Activated B cell treated with CpG ODN at 0.5 μM for 24 hours (primary cell): ENCODE measurements at regions of chr5 and their contacts with region 1.

Region 1: DNA sequence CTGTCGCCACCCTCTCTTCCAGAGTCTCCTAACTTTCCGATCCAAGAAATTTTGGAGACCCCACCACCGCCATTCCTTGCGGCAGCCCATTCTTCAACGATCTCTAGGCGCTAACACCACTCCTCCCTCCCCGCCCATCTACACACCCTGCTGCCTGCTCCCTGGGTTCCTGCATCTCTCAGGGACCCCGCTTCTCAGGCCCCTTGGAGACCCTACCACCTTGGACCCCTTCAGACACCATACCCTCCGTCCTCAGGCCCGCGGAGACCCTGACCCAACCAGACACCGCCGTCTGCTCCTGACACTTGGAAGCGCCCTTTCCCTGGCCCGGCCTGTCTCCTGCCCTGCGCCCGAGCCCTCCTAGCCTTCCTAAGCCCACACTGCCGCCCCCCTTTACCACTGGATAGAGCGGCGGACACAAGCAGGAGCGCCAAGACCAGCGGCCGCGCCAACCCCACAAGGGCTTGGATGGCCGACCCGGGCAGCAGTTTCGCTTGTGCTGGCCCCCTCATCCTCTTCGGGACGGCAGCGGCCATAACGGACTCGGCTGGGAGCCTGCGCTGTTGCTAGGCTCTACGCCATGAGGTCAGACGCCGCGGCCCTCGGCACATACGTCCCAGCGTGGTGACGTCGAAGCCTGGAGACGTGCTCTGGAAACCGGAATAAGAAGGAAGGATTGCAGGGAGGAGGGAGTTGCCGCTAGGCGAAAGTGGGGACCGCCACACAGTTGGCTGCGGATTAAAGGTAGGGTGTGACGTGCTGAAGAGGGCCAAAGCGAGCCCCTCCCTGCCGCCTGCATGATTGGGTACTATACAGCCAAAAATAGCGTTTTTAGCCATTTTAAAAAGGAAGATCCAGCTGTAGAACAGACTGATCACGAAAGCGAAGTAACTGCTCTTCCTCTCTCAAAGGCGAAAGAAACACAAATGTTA is at the start of gene C5orf15:
- DNase-seq: peak; percentile 83
- ATAC-seq: peak; percentile 90
- H3K4me3 Mint-ChIP-seq: peak within 1 kb of the TSS; percentile 95
- H3K27ac Mint-ChIP-seq: peak within 1 kb of the TSS; percentile 96
- H3K4me1 Mint-ChIP-seq: peaks cover 58% of the 10 kb centered on the region
- H3K27me3 Mint-ChIP-seq: no peaks in the 10 kb centered on the region
- CTCF ChIP-seq: no peak
- total RNA-seq, gene C5orf15: 25.5 and 25.7 TPM in 2 replicates

Region 2: GRCh38 chr5:133307275-133307674 is 661.0 kb before region 1 on chr5:
- CTCF ChIA-PET with region 1: no interaction called
- POLR2A ChIA-PET with region 1: no interaction called
- intact Hi-C with region 1: no loop called
- DNase-seq: no peak
- ATAC-seq: no peak
- H3K4me3 Mint-ChIP-seq: no peak overlapping the region
- H3K27ac Mint-ChIP-seq: no peak overlapping the region
- H3K4me1 Mint-ChIP-seq: no peaks in the 10 kb centered on the region
- H3K27me3 Mint-ChIP-seq: peaks cover 5% of the 10 kb centered on the region
- CTCF ChIP-seq: no peak

Region 3: GRCh38 chr5:133842846-133843611 is 125.3 kb before region 1 on chr5:
- CTCF ChIA-PET with region 1: no interaction called
- POLR2A ChIA-PET with region 1: no interaction called
- intact Hi-C with region 1: no loop called
- DNase-seq: no peak
- ATAC-seq: no peak
- H3K4me3 Mint-ChIP-seq: no peak overlapping the region
- H3K27ac Mint-ChIP-seq: no peak overlapping the region
- H3K4me1 Mint-ChIP-seq: peaks cover 19% of the 10 kb centered on the region
- H3K27me3 Mint-ChIP-seq: no peaks in the 10 kb centered on the region
- CTCF ChIP-seq: no peak

Region 4: DNA sequence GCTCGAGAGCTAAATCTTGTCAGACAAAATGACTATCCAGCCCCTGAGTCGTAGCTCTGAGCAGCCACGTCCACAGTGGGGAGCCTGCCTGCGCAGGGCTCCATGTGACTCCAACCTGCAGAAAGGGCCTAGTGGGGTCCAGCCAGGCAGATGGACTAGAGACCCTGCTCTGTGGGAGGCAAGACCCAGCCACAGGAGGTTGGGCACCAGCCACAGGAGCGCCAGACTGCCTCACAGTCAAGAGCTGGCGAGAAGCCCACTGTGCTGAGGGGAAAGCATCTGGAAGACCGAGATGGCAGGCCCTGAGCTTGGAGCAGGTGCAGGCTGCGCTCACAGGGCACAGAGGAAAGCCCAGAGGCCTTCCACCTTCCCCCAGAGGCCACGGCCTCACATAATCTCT is 61.2 kb before region 1 on chr5:
- CTCF ChIA-PET with region 1: no interaction called
- POLR2A ChIA-PET with region 1: no interaction called
- intact Hi-C with region 1: loop called (anchors 1 kb)
- DNase-seq: no peak
- ATAC-seq: no peak
- H3K4me3 Mint-ChIP-seq: no peak overlapping the region
- H3K27ac Mint-ChIP-seq: no peak overlapping the region
- H3K4me1 Mint-ChIP-seq: peaks cover 14% of the 10 kb centered on the region
- H3K27me3 Mint-ChIP-seq: no peaks in the 10 kb centered on the region
- CTCF ChIP-seq: no peak

Region 5: GRCh38 chr5:133917785-133918184 is 50.5 kb before region 1 on chr5:
- CTCF ChIA-PET with region 1: no interaction called
- POLR2A ChIA-PET with region 1: no interaction called
- intact Hi-C with region 1: no loop called
- DNase-seq: no peak
- ATAC-seq: no peak
- H3K4me3 Mint-ChIP-seq: no peak overlapping the region
- H3K27ac Mint-ChIP-seq: no peak overlapping the region
- H3K4me1 Mint-ChIP-seq: peaks cover 42% of the 10 kb centered on the region
- H3K27me3 Mint-ChIP-seq: no peaks in the 10 kb centered on the region
- CTCF ChIP-seq: no peak

Region 6: DNA sequence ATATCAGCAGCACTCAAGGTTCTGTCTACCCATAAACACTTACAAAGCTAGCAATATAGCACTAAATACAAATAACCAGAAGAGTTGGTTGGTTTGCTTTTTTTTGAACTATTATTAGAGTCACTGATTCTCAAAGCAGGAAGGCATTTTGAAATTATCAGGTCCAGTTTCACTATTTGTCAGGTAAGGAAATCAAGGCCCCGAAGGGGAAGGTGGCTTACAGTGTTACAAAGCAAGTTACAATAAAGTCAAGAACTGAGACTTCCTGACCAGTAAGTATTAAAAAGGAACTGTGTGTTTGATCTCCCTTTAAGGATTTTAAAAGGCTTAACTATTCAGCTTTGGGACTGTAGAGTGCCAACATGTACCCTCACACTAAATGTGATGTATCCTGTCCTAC is 10.7 kb before region 1 on chr5:
- CTCF ChIA-PET with region 1: no interaction called
- POLR2A ChIA-PET with region 1: interaction called, 22 read pairs
- intact Hi-C with region 1: loop called (anchors 1 kb)
- DNase-seq: no peak
- ATAC-seq: peak; percentile 82
- H3K4me3 Mint-ChIP-seq: peak overlapping the region; percentile 56
- H3K27ac Mint-ChIP-seq: peak overlapping the region; percentile 86
- H3K4me1 Mint-ChIP-seq: peaks cover 58% of the 10 kb centered on the region
- H3K27me3 Mint-ChIP-seq: no peaks in the 10 kb centered on the region
- CTCF ChIP-seq: no peak